ENCODE measurements at regions of chr13 and their contacts with region 1.

Region 1: GRCh38 chr13:44577236-44578066 is 1.3 kb upstream of the TSC22D1 start:
- DNase-seq: peak; percentile 97
- H3K4me3 Mint-ChIP-seq: peak overlapping the region; percentile 93
- H3K27ac Mint-ChIP-seq: peak overlapping the region; percentile 94
- H3K4me1 Mint-ChIP-seq: peaks cover 27% of the 10 kb centered on the region
- H3K27me3 Mint-ChIP-seq: peaks cover 47% of the 10 kb centered on the region

Region 2: GRCh38 chr13:43878892-43879754 is 698.3 kb before region 1 on chr13 and contains the start of gene CCDC122:
- intact Hi-C with region 1: loop called (anchors 1 kb)
- DNase-seq: peak; percentile 93
- H3K4me3 Mint-ChIP-seq: peak within 1 kb of the TSS; percentile 89
- H3K27ac Mint-ChIP-seq: peak within 1 kb of the TSS; percentile 90
- H3K4me1 Mint-ChIP-seq: peaks cover 13% of the 10 kb centered on the region
- H3K27me3 Mint-ChIP-seq: peaks cover 17% of the 10 kb centered on the region
- total RNA-seq, gene CCDC122: 0.56 and 1.7 TPM in 2 replicates

Region 3: GRCh38 chr13:44197791-44198770 is 379.4 kb before region 1 on chr13:
- intact Hi-C with region 1: loop called (anchors 2 kb)
- DNase-seq: peak; percentile 78
- H3K4me3 Mint-ChIP-seq: no peak overlapping the region
- H3K27ac Mint-ChIP-seq: peak overlapping the region; percentile 34
- H3K4me1 Mint-ChIP-seq: peaks cover 28% of the 10 kb centered on the region
- H3K27me3 Mint-ChIP-seq: peaks cover 43% of the 10 kb centered on the region

Region 4: DNA sequence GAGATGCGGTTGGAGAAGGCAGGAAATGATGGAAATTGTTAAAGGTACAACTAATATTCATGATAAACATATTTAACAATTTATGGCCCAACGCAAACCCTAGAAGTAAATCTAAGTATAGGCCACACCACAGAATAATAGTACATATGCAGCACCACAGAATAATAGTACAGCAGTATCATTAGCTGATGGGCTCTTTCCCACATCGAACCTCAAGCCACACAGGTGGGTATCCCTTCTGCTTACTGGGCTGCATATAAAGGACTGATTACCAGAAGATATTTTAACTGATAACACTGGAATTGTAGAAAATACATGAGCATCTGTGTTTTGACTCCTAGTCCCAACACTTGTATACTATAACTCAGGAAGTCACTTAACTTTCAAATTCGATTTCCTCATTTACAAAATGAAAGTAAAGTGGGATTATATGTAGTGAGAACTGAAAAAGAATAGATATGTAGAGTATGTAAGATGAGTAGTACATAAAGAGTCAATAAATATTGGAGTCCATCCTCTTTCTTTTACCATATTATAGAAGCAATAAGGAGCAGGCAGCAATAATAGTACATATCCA is 92.8 kb before region 1 on chr13:
- intact Hi-C with region 1: loop called (anchors 2 kb)
- DNase-seq: peak; percentile 60
- H3K4me3 Mint-ChIP-seq: peak overlapping the region; percentile 64
- H3K27ac Mint-ChIP-seq: no peak overlapping the region
- H3K4me1 Mint-ChIP-seq: peaks cover 8% of the 10 kb centered on the region
- H3K27me3 Mint-ChIP-seq: peaks cover 3% of the 10 kb centered on the region

Region 5: DNA sequence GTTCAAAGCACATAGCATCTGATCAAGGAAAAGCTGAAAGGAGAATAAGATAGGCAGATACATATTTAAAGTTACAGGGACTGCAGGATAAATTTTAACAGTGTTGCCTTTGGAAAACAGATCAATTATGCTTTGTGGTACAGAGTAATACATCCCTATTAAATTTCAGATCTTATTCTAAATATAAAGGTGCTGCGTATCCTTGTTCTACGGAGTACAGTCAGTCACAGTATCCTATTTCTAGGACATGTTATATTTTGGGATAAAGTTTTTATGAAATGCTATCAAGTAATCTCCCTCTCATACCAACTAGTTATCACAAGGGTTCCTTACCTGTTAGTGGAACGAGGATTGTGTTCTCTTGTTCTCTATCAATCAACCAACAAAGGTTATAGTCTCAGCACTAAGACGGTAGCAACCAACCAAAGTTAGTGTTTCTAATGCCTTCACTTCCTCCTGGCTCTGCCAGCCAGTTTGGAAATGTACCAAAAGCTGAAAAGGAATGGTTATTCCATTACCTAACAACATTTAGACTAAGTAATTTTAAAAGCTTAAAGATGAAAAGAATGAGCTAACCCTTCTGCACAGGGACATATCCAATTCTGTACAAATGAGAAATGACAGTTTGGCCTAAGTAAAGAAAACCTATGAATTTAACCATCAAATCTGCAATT is 36.6 kb before region 1 on chr13:
- intact Hi-C with region 1: no loop called
- DNase-seq: no peak
- H3K4me3 Mint-ChIP-seq: no peak overlapping the region
- H3K27ac Mint-ChIP-seq: no peak overlapping the region
- H3K4me1 Mint-ChIP-seq: no peaks in the 10 kb centered on the region
- H3K27me3 Mint-ChIP-seq: no peaks in the 10 kb centered on the region

Region 6: DNA sequence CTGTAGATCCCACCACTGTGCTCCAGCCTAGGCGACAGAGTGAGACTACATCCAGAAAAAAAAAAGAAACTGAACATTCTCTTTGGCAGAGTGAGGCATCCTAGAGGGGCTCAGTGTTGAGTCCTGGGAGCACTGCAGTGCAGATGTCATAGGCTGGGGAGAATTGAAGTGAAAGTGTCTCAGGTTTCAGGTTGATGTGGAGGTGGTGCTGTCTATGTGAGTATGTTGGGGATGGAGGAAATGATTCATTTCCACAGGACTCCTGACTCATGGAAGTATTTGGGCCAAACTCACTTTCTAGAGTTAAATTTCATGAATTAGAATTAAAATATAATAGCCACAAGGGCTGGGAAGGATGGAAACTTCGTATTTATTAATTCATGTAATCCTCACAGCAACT is 133.1 kb after region 1 on chr13:
- intact Hi-C with region 1: loop called (anchors 2 kb)
- DNase-seq: no peak
- H3K4me3 Mint-ChIP-seq: no peak overlapping the region
- H3K27ac Mint-ChIP-seq: no peak overlapping the region
- H3K4me1 Mint-ChIP-seq: peaks cover 14% of the 10 kb centered on the region
- H3K27me3 Mint-ChIP-seq: peaks cover 18% of the 10 kb centered on the region

Region 7: DNA sequence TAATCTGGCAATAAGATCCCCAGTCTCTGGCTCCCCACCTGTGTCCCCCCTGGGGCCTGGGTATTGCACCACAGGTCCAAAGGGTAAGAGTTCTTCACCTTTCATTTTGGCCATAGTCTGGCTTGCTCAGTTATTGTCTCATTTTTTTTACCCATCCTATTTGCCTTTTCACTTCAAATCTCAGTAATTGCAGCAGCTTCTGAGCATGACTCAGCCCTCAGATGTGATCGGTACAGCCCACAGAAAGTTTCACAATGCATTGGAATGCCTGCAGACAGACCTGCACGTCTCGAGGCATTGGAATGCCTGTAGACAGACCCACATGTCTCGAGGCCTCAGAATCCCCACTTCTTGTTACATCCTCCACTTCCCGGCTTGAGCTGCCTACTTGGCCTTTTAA is 238.2 kb after region 1 on chr13:
- intact Hi-C with region 1: loop called (anchors 2 kb)
- DNase-seq: peak; percentile 71
- H3K4me3 Mint-ChIP-seq: no peak overlapping the region
- H3K27ac Mint-ChIP-seq: no peak overlapping the region
- H3K4me1 Mint-ChIP-seq: peaks cover 16% of the 10 kb centered on the region
- H3K27me3 Mint-ChIP-seq: peaks cover 29% of the 10 kb centered on the region

Region 8: DNA sequence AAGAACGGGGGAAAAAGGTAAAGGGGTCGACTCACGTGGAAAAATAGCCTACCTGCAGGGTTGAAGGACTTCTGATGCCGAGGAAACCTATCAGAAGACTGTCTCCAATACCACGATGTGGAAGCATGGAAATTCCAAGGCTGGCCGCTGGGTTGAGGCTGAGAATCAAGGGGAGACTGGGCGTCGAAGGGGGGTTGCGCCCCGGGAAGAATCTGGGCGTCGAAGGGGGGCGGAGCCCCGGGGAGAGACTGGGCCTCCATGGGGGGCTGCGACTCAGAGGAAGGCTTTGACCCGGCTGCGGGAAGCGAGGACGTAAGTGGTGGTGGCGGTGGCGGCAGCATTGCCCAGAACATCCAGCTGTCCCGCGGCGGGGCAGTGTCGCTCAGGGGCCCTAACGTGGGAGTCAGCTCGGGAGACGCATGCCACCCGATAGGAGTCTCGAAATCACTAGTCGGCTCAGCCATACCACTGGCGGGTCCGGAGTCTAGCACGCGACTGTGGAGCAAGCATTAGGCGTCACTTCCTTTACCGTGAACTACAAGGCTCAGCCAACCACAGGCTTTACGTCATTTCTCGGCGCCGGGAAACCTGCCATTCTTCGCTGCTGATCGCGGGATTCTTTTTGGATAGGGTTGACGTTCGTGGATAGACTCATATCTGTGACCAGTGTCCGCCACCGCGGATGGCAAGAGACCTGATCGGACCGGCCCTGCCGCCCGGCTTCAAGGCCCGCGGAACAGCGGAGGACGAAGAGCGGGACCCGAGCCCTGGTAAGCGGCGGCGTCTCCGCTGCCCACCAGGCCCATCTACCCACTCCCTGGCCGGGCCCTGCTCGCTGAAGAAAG is 411.7 kb after region 1 on chr13 and contains the starts of genes GPALPP1 and NUFIP1:
- intact Hi-C with region 1: loop called (anchors 1 kb)
- DNase-seq: peak; percentile 98
- H3K4me3 Mint-ChIP-seq: peak within 1 kb of the TSS; percentile 99
- H3K27ac Mint-ChIP-seq: peak within 1 kb of the TSS; percentile 98
- H3K4me1 Mint-ChIP-seq: peaks cover 46% of the 10 kb centered on the region
- H3K27me3 Mint-ChIP-seq: no peaks in the 10 kb centered on the region
- total RNA-seq, gene GPALPP1: 29.1 and 32.3 TPM in 2 replicates
- total RNA-seq, gene NUFIP1: 13.3 and 13.8 TPM in 2 replicates

Measured in activated CD4-positive, alpha-beta T cell treated with anti-CD3 and anti-CD28 coated beads, Interleukin-2, amount 10 ng/mL, durations not matched to agents 24 days and 14 days (primary cell).